Dorsolateral prefrontal cortex (tissue), 120 donors: ENCODE measurements at regions of chr17 and their contacts with region 1.

Region 1: DNA sequence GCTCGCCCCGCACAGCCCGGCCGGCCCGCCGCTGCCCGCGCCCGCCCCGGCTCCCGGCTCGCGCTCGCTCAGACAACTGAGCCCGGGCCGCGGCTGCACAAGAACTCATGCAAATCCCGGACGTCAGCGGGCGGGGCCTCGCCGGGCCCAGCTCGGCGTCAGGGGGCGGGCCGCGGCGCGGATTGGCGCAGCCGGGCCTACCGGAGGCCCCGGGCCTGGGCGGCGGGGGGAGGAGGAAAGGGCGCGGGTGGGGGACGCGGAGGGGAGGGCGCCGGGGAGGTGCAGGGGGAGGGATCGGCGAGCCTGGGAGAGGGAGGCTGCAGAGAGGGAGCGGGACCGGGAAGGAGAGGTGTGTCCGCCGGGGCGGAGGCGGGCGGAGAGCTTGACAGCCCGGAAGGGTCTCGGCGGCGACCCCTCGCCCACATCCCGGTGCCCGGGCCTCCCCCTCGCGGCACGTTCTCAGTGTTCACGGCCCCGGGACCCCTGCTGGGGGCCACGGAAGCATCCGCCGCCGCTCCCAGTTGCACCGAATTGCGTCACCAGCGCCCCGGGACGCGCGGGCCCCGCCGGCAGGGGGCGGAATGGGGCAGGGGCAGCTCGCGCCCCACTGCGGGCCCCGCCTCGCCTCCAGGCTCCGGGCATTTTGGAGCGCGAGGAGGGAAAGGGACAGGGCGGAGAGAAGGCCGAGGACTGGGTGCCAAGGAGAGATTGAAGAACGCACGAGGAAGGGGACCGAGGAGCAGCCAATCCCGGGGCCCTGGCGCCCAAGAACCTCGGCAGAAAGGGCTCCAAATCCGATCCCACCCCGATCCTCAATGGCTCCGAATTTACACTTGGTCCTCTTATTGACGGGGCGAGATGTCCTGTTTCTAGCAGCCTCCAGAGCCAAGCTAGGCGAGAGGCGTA is at the start of gene CBX4:
- DNase-seq: peak; percentile 94 to 98 (median 96)
- H3K4me3 ChIP-seq: peak within 1 kb of the TSS; percentile 57 to 98 (median 84)
- H3K27ac ChIP-seq: peak within 1 kb of the TSS; percentile 86 to 99 (median 98)
- H3K27me3 ChIP-seq: peaks cover 14 to 51% (median 42%) of the 10 kb centered on the region in 45 donors
- CTCF ChIP-seq: peak in 55 of 56 donors; percentile 10 to 68 (median 51)
- total RNA-seq, gene CBX4: 26.4 to 54.9 (median 35.9) TPM

Region 2: DNA sequence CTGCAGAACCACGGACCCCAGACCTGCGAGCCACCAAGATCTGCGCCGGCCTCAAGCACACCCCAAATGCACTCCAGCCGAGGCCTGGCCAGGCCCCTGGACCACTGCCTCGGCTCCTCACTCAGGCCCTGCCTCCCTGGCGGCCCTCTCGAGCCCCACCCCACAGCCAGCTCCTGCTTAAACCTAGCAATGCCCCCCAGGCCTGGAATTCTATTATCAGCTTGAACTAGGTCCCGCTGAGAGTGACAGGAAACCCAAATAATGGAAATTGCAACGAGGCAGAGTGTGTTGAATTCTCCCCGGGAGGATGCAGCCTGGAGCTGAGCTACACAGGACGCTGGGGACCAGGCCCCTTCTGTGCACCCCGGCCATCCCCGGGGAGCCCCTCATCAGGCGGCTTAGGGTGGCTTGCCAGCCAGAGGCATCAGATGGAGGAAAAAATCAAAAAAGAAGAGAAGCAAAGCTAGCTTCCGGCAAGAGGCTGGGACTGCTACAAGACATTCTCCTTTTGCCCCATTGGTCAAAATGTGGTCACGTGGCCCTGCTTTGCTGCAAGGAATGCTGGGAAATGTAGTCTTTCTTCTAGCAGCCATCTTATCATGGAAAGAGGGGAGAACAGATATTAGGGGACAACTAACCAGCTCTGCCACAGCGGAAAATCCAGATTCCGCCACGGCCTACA is 111.2 kb before region 1 on chr17:
- intact Hi-C with region 1: no loop called
- DNase-seq: peak; percentile 75 to 97 (median 93)
- H3K4me3 ChIP-seq: peak overlapping the region; percentile 33 to 77 (median 61)
- H3K27ac ChIP-seq: peak overlapping the region in 52 of 59 donors; percentile 28 to 91 (median 78)
- H3K27me3 ChIP-seq: no peaks in the 10 kb centered on the region
- CTCF ChIP-seq: peak in 10 of 56 donors; percentile 10 to 47 (median 24)

Region 3: DNA sequence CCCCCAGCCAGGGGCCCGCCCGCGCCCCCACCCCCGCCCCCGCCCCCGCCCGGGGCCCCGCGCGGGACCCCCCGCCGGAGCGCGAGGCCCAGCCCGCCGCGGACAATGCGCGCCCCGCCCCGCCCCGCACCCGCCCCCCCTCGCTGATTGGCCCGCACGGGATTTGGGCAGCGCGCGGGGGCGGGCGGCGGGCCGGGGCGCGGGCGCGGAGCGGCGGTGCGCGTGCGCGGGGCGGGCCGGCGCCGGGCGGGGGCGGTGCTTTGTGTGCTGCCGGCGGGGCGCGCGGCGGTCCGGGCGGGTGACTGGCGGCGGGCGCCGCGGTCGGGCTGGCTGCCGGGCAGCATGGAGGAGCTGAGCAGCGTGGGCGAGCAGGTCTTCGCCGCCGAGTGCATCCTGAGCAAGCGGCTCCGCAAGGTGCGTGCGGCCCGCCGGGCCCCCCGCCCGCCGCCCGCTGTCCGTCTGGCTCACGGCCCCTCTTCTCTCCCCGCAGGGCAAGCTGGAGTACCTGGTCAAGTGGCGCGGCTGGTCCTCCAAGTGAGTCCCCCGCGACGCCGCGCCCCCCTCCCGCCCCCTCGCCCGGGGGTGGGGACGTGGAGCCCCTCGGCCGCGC is 61.6 kb before region 1 on chr17 and contains the start of gene CBX2:
- intact Hi-C with region 1: loop called in 1 of 2 experiments (anchors 5 kb)
- DNase-seq: peak; percentile 44 to 83 (median 61)
- H3K4me3 ChIP-seq: peak within 1 kb of the TSS; percentile 31 to 83 (median 68)
- H3K27ac ChIP-seq: peak within 1 kb of the TSS in 31 of 59 donors; percentile 0 to 80 (median 42)
- H3K27me3 ChIP-seq: peaks cover 0 to 60% (median 35%) of the 10 kb centered on the region in 45 donors
- CTCF ChIP-seq: peak in 1 of 56 donors; percentile 13
- total RNA-seq, gene CBX2: 0.44 to 4.2 (median 1.8) TPM in 119 of 120 experiments, not detected in the other

Region 4: GRCh38 chr17:79796763-79797491 is 42.7 kb before region 1 on chr17 and contains the start of gene CBX8:
- intact Hi-C with region 1: loop called in 1 of 2 experiments (anchors 2 kb)
- DNase-seq: peak; percentile 98 to 100 (median 99)
- H3K4me3 ChIP-seq: peak within 1 kb of the TSS; percentile 52 to 86 (median 76)
- H3K27ac ChIP-seq: peak within 1 kb of the TSS in 58 of 59 donors; percentile 29 to 97 (median 86)
- H3K27me3 ChIP-seq: peaks cover 30 to 72% (median 54%) of the 10 kb centered on the region in 45 donors
- CTCF ChIP-seq: peak in 44 of 56 donors; percentile 6 to 57 (median 36)
- total RNA-seq, gene CBX8: 1.5 to 10.3 (median 5.0) TPM

Region 5: GRCh38 chr17:79810130-79811010 is 29.2 kb before region 1 on chr17:
- intact Hi-C with region 1: loop called in 1 of 2 experiments (anchors 5 kb)
- DNase-seq: peak; percentile 52 to 78 (median 73)
- H3K4me3 ChIP-seq: peak overlapping the region in 38 of 59 donors; percentile 7 to 56 (median 34)
- H3K27ac ChIP-seq: no peak overlapping the region
- H3K27me3 ChIP-seq: peaks cover 17 to 96% (median 81%) of the 10 kb centered on the region in 45 donors
- CTCF ChIP-seq: no peak

Region 6: GRCh38 chr17:79970576-79971068 is 131.0 kb after region 1 on chr17:
- intact Hi-C with region 1: loop called in 1 of 2 experiments (anchors 5 kb)
- DNase-seq: peak in 7 of 10 donors; percentile 22 to 74 (median 44)
- H3K4me3 ChIP-seq: no peak overlapping the region
- H3K27ac ChIP-seq: peak overlapping the region in 1 of 59 donors; percentile 13
- H3K27me3 ChIP-seq: no peaks in the 10 kb centered on the region
- CTCF ChIP-seq: peak in 55 of 56 donors; percentile 21 to 91 (median 61)